Natural killer cell (primary cell): ENCODE measurements at regions of chr4 and their contacts with region 1.

Region 1: DNA sequence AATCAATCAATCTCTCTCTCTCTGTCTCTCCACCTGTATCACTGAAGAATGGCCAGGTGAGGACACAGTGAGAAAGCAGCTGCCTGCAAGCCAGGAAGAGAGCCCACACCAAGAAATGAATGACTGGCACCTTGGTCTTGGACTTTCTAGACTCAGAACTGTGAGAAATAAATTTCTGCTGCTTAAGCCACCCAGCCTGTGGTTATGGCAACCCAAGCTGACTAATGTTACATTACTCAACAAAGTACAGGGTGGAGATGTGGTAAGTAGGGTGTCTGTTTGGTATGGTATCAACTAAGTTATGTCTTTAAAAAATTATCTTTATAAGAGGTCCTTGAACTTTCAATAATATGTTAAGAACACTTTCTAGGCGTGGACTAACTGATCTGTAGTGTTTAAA is 159.3 kb downstream of the EPHA5 start:
- DNase-seq: no peak
- ATAC-seq: no peak
- H3K4me3 ChIP-seq: no peak overlapping the region
- H3K4me3 Mint-ChIP-seq: no peak overlapping the region
- H3K27ac ChIP-seq: no peak overlapping the region
- H3K27ac Mint-ChIP-seq: no peak overlapping the region
- H3K4me1 ChIP-seq: no peaks in the 10 kb centered on the region
- H3K4me1 Mint-ChIP-seq: no peaks in the 10 kb centered on the region
- H3K27me3 ChIP-seq: no peaks in the 10 kb centered on the region
- H3K27me3 Mint-ChIP-seq: no peaks in the 10 kb centered on the region
- CTCF ChIP-seq: no peak

Region 2: DNA sequence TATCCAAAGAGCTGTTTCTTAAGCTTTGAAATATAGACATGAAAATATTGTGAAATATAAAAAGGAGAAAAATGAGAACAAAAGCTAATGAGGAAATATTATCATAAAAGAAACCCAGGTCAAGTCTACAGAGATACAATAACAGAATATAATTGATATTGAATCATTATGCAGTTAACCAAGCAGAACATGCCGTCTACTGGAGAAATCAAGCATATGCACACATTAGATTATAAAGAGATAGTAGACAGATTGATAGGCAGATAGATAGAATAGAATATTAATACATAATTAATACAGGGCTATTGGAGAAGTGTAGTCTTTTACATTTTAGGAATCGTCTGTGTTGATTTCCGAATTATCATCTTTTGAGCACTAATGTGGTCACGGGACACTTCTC is 49.2 kb before region 1 on chr4:
- intact Hi-C with region 1: loop called (anchors 5 kb)
- DNase-seq: no peak
- ATAC-seq: no peak
- H3K4me3 ChIP-seq: no peak overlapping the region
- H3K4me3 Mint-ChIP-seq: no peak overlapping the region
- H3K27ac ChIP-seq: no peak overlapping the region
- H3K27ac Mint-ChIP-seq: no peak overlapping the region
- H3K4me1 ChIP-seq: no peaks in the 10 kb centered on the region
- H3K4me1 Mint-ChIP-seq: no peaks in the 10 kb centered on the region
- H3K27me3 ChIP-seq: no peaks in the 10 kb centered on the region
- H3K27me3 Mint-ChIP-seq: no peaks in the 10 kb centered on the region
- CTCF ChIP-seq: no peak

Region 3: GRCh38 chr4:65559270-65559669 is 48.3 kb after region 1 on chr4:
- intact Hi-C with region 1: no loop called
- DNase-seq: no peak
- ATAC-seq: no peak
- H3K4me3 ChIP-seq: no peak overlapping the region
- H3K4me3 Mint-ChIP-seq: no peak overlapping the region
- H3K27ac ChIP-seq: no peak overlapping the region
- H3K27ac Mint-ChIP-seq: no peak overlapping the region
- H3K4me1 ChIP-seq: no peaks in the 10 kb centered on the region
- H3K4me1 Mint-ChIP-seq: no peaks in the 10 kb centered on the region
- H3K27me3 ChIP-seq: no peaks in the 10 kb centered on the region
- H3K27me3 Mint-ChIP-seq: no peaks in the 10 kb centered on the region
- CTCF ChIP-seq: no peak

Region 4: GRCh38 chr4:66048861-66049260 is 537.9 kb after region 1 on chr4:
- intact Hi-C with region 1: no loop called
- DNase-seq: no peak
- ATAC-seq: no peak
- H3K4me3 ChIP-seq: no peak overlapping the region
- H3K4me3 Mint-ChIP-seq: no peak overlapping the region
- H3K27ac ChIP-seq: no peak overlapping the region
- H3K27ac Mint-ChIP-seq: no peak overlapping the region
- H3K4me1 ChIP-seq: no peaks in the 10 kb centered on the region
- H3K4me1 Mint-ChIP-seq: no peaks in the 10 kb centered on the region
- H3K27me3 ChIP-seq: no peaks in the 10 kb centered on the region
- H3K27me3 Mint-ChIP-seq: no peaks in the 10 kb centered on the region
- CTCF ChIP-seq: no peak